Kidney (tissue), 22 donors: ENCODE measurements at regions of chr4 and their contacts with region 1.

Region 1: DNA sequence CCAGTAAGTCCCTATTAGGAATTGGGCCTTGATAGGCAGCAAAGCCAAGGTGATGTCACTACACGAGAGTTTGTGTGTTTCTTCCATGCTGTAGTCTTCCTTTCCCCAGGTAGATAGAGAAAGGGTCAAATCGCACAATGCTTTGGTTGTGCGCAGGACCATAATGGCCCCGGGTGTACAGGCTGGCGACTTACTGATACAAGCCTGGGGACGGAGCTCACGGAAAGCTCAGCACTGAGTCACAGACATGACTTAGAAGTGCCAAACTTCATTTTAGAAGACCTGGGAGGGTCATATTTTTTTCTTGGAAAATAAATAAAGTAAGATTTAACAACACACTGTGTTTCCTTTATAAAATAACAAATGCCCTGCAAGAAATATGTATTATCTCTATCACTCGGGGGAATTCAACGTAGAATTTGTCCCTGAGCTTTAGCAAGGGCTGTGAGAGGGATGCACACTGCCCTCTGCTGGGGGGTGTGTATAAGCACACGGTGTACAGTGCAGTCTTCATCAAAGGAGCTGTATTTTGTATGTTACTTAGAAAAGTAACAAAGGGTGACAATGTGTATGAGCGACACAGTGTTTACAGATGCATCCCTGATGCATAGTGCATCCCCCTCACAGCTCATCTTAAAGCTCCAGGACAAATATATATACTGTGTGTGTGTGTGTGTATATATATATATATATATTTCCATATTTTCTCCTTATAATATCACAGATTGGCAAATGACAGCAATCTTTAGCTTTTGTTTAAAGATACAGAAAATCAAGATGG is 254.5 kb upstream of the VEGFC start:
- DNase-seq: peak; percentile 57 to 81 (median 65)
- H3K4me3 ChIP-seq: no peak overlapping the region
- H3K27ac ChIP-seq: no peak overlapping the region
- H3K4me1 ChIP-seq: no peaks in the 10 kb centered on the region
- H3K27me3 ChIP-seq: no peaks in the 10 kb centered on the region
- CTCF ChIP-seq: peak; percentile 77

Region 2: GRCh38 chr4:176377780-176378179 is 669.5 kb before region 1 on chr4:
- intact Hi-C with region 1: loop called (anchors 10 kb)
- DNase-seq: peak in 2 of 5 donors; percentile 30 to 44
- H3K4me3 ChIP-seq: no peak overlapping the region
- H3K27ac ChIP-seq: no peak overlapping the region
- H3K4me1 ChIP-seq: no peaks in the 10 kb centered on the region
- H3K27me3 ChIP-seq: no peaks in the 10 kb centered on the region
- CTCF ChIP-seq: peak; percentile 41

Region 3: DNA sequence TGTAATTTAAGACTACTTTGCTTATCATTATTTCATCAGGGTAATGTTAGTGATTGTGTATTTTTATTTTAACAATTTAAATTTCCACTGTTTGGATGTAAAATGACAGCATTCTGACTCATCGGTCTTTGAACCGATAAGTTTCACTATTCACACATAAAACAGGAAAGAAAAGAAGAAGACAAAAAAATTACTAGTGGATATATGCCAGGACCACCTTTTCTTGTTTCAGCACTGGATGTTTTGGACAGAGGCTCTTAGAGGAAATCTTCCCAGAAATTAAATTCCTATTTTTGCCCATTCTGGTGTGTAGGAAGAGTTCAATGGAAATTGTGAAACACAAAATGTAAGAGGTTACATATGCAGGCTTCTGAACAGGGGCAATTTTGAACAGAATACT is 312.0 kb before region 1 on chr4:
- intact Hi-C with region 1: no loop called
- DNase-seq: peak in 2 of 5 donors; percentile 5 to 8
- H3K4me3 ChIP-seq: no peak overlapping the region
- H3K27ac ChIP-seq: no peak overlapping the region
- H3K4me1 ChIP-seq: no peaks in the 10 kb centered on the region
- H3K27me3 ChIP-seq: no peaks in the 10 kb centered on the region
- CTCF ChIP-seq: no peak

Region 4: GRCh38 chr4:176957353-176958118 is 89.7 kb before region 1 on chr4:
- intact Hi-C with region 1: no loop called
- DNase-seq: no peak
- H3K4me3 ChIP-seq: no peak overlapping the region
- H3K27ac ChIP-seq: no peak overlapping the region
- H3K4me1 ChIP-seq: no peaks in the 10 kb centered on the region
- H3K27me3 ChIP-seq: no peaks in the 10 kb centered on the region
- CTCF ChIP-seq: no peak

Region 5: DNA sequence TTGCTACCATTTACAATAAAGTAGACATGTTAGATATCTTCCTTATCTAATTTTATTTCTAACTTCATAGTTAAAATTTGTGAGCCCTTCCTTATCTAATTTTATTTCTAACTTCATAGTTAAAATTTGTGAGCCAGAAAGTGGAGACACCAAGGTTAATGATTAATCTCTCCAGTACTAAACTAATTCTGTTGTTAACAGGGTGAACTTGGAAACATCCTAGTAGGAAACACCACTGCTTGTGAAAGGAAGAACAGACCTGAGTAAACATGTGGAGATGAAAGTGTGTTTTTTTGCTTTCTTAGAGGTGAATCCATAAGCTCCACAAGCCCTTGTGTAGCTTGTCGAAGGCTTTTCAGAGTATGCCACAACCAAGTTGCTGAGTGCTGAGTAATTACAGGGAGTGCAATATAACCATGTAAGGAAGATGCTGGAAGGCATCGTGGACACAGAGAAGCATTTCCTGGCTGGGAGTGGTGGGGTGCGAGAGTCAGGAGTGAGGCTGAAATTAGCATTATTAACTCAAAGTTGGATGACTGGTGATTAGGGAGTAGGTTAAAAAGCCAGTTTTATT is 143.8 kb after region 1 on chr4:
- intact Hi-C with region 1: no loop called
- DNase-seq: peak in 2 of 5 donors; percentile 22 to 25
- H3K4me3 ChIP-seq: peak overlapping the region in 1 of 3 donors; percentile 25
- H3K27ac ChIP-seq: peak overlapping the region in 1 of 2 donors; percentile 52
- H3K4me1 ChIP-seq: peaks cover 0 to 11% (median 3%) of the 10 kb centered on the region in 3 donors
- H3K27me3 ChIP-seq: no peaks in the 10 kb centered on the region
- CTCF ChIP-seq: no peak